Transverse colon (tissue), 4 donors: ENCODE measurements at regions of chr17 and their contacts with region 1.

Region 1: GRCh38 chr17:27236717-27237315 is 57.1 kb upstream of the WSB1 start:
- DNase-seq: peak; percentile 89
- H3K4me3 ChIP-seq: no peak overlapping the region
- H3K27ac ChIP-seq: no peak overlapping the region
- H3K4me1 ChIP-seq: peaks cover 0 to 17% (median 3%) of the 10 kb centered on the region in 4 donors
- H3K27me3 ChIP-seq: no peaks in the 10 kb centered on the region
- CTCF ChIP-seq: peak; percentile 91 to 94 (median 93)
- EP300 ChIP-seq: no peak
- POLR2A ChIP-seq: no peak

Region 2: GRCh38 chr17:26782163-26782562 is 454.7 kb before region 1 on chr17:
- in situ Hi-C with region 1: no loop called
- intact Hi-C with region 1: no loop called
- DNase-seq: no peak
- H3K4me3 ChIP-seq: no peak overlapping the region
- H3K27ac ChIP-seq: no peak overlapping the region
- H3K4me1 ChIP-seq: no peaks in the 10 kb centered on the region
- H3K27me3 ChIP-seq: no peaks in the 10 kb centered on the region
- CTCF ChIP-seq: no peak
- EP300 ChIP-seq: no peak
- POLR2A ChIP-seq: no peak

Region 3: GRCh38 chr17:27332485-27333409 is 95.9 kb after region 1 on chr17:
- in situ Hi-C with region 1: loop called in 3 of 4 experiments (anchors 5 to 10 kb)
- intact Hi-C with region 1: loop called (anchors 2 kb)
- DNase-seq: peak; percentile 98
- H3K4me3 ChIP-seq: peak overlapping the region in 3 of 4 donors; percentile 44 to 67 (median 46)
- H3K27ac ChIP-seq: peak overlapping the region; percentile 88 to 95 (median 90)
- H3K4me1 ChIP-seq: peaks cover 5 to 18% (median 16%) of the 10 kb centered on the region in 4 donors
- H3K27me3 ChIP-seq: no peaks in the 10 kb centered on the region
- CTCF ChIP-seq: peak; percentile 77 to 97 (median 86)
- EP300 ChIP-seq: peak; percentile 33
- POLR2A ChIP-seq: no peak